ENCODE measurements at regions of chr1 and their contacts with region 1.

Region 1: DNA sequence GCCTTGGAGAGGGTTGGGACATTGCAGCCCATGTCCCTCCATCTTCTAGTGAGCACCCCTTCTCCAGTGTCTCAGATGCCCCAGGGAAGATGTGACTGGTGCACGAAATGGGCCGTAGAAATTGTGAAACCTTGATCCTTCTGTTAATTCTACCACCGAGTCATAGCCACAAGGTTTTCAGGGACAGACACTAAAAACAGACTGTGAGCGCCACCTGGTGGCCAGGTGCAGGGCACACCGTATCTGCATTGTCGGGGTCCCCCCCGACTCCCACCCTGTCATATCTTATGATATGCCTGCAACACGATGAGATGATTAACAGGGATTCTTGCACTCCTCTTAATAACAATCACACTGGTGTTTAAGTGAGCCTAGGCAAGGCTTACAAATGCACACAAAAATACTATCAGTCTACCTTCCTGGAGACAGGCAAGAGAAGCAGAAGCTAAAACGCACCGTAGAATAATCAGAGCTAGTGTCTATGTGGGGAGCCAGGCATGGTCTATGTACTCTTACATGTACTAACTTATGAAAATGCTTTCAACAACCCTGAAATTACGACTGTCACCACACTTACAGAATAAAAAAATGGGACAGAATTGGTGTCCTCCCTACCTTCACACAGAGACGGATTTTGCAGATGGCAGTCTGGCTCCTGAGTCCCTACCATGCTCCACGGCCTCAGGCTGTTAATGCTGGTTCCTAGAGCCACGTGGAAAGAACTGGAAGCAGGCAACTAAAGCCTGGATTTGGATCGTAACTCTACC is 57.9 kb downstream of the FHAD1 start:
- DNase-seq: peak; percentile 87
- ATAC-seq: peak; percentile 83
- H3K4me3 Mint-ChIP-seq: no peak overlapping the region
- H3K27ac Mint-ChIP-seq: no peak overlapping the region
- H3K4me1 Mint-ChIP-seq: no peaks in the 10 kb centered on the region
- H3K27me3 Mint-ChIP-seq: peaks cover 6% of the 10 kb centered on the region

Region 2: GRCh38 chr1:15152318-15153183 is 152.3 kb before region 1 on chr1:
- CTCF ChIA-PET with region 1: interaction called, 4 read pairs
- POLR2A ChIA-PET with region 1: no interaction called
- intact Hi-C with region 1: loop called in 1 of 2 experiments (anchors 1 kb)
- DNase-seq: peak; percentile 58
- ATAC-seq: peak; percentile 45
- H3K4me3 Mint-ChIP-seq: peak overlapping the region; percentile 8
- H3K27ac Mint-ChIP-seq: no peak overlapping the region
- H3K4me1 Mint-ChIP-seq: peaks cover 19% of the 10 kb centered on the region
- H3K27me3 Mint-ChIP-seq: peaks cover 47% of the 10 kb centered on the region

Region 3: DNA sequence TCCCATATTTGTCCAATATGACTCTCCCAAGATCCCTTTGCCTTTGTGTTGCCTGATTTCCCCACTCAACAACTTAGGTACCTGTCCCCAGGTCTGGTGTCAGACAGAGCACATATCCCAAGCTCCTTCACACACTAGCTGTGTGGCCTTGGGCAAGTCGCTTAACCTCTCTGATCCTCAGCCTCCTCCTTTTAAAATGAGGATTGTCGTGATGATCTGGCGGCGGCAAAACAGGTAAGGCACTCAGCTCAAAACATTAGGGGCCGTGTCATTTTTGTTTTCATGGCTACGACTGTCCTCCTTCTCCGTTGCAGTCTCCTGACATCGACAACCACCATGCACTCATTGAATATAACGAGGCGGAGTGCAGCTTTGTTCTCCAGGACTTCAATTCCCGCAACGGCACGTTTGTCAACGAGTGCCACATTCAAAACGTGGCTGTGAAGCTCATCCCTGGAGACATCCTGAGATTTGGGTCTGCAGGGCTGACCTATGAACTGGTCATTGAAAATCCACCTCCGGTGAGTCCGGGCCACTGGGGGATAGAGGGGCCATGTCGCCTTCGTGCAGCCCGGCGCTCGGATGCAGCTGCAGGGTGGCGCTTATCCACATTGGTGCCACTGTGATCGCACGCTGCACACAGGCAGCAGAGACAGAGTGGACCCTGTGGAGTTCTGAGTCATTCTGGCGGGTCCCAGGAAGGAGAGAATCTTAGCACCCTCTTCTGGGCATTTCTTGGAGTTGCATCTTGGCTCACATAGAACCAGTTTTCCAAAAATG is 32.7 kb before region 1 on chr1:
- CTCF ChIA-PET with region 1: no interaction called
- POLR2A ChIA-PET with region 1: no interaction called
- intact Hi-C with region 1: loop called in 1 of 2 experiments (anchors 1 kb)
- DNase-seq: peak; percentile 71
- ATAC-seq: peak; percentile 95
- H3K4me3 Mint-ChIP-seq: no peak overlapping the region
- H3K27ac Mint-ChIP-seq: no peak overlapping the region
- H3K4me1 Mint-ChIP-seq: peaks cover 5% of the 10 kb centered on the region
- H3K27me3 Mint-ChIP-seq: peaks cover 32% of the 10 kb centered on the region

Region 4: GRCh38 chr1:15288173-15288926 is 16.5 kb before region 1 on chr1:
- CTCF ChIA-PET with region 1: interaction called, 14 read pairs
- POLR2A ChIA-PET with region 1: interaction called, 3 read pairs
- intact Hi-C with region 1: no loop called
- DNase-seq: no peak
- ATAC-seq: no peak
- H3K4me3 Mint-ChIP-seq: no peak overlapping the region
- H3K27ac Mint-ChIP-seq: no peak overlapping the region
- H3K4me1 Mint-ChIP-seq: peaks cover 12% of the 10 kb centered on the region
- H3K27me3 Mint-ChIP-seq: peaks cover 14% of the 10 kb centered on the region